Left cardiac atrium (tissue), 4 donors: ENCODE measurements at regions of chr1 and their contacts with region 1.

Region 1: GRCh38 chr1:205255941-205256780 is 28.4 kb downstream of the TMCC2 start:
- DNase-seq: peak; percentile 90
- ATAC-seq: peak; percentile 89 to 91

Region 2: DNA sequence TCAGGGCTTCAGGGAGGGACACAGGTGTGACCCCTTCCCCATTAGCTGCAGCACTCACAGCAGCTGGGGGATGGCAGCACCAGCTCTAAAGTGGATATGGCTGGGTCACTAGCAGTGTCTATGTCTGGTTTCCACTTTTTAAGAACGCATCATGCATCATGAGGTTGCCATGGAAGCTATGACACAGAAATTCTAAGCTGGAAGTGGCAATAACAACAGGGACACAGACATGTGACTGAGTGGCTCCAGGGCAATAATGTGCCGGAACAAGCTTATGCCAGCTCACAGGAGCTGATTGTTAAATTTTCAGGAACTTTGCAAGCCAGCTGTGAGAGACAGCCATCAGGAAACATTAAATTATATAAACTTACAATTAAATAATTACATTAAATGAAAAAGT is 436.7 kb before region 1 on chr1:
- intact Hi-C with region 1: loop called in 1 of 2 experiments (anchors 10 kb)
- DNase-seq: no peak
- ATAC-seq: no peak

Region 3: DNA sequence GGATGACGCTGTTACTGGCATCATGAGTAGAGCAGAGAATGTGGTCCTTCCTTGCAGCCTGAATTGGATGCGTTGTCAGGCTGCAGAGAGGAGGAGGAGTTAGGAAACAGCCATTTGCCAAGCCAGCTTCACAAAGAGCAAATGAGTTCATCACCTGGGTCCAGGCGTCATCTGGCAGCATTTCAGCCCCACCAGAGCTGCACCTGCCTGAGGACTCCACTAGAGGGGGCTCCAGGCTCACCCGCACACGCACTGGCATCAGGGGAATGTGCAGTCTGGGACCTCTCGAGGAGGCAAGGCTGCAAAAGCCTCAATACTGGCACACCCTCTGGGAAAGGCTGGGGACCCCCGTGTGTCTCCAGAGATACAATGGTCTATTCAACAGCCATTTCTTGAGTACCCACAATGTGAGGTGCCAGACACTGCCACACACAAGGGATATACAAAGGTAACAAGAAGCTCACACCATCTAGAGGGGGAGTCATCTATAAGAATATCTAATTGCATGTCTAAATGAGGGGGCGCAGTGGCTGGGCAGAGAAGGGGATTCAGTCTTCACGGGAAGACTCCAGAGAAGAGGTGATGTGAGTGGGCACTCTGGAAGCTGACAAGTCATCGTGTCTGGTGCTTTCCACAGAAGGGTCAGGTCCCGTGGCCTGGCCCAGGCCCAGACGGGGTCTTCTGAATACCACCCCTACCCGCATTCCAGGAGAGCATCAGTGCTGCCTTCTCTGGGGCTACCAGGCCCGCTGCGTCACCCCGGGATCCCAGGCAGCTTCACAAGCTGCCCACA is 266.7 kb before region 1 on chr1:
- intact Hi-C with region 1: loop called (anchors 5 to 10 kb)
- DNase-seq: peak; percentile 66
- ATAC-seq: peak; percentile 81 to 85

Region 4: GRCh38 chr1:205121660-205122488 is 134.3 kb before region 1 on chr1 and contains the start of gene RBBP5:
- intact Hi-C with region 1: loop called in 1 of 2 experiments (anchors 5 kb)
- DNase-seq: peak; percentile 93
- ATAC-seq: peak; percentile 99
- total RNA-seq, gene RBBP5: 10.0 to 11.0 TPM

Region 5: GRCh38 chr1:205229399-205229871 is 26.7 kb before region 1 on chr1:
- intact Hi-C with region 1: loop called in 1 of 2 experiments (anchors 1 kb)
- DNase-seq: peak; percentile 50
- ATAC-seq: peak; percentile 67 to 73

Region 6: DNA sequence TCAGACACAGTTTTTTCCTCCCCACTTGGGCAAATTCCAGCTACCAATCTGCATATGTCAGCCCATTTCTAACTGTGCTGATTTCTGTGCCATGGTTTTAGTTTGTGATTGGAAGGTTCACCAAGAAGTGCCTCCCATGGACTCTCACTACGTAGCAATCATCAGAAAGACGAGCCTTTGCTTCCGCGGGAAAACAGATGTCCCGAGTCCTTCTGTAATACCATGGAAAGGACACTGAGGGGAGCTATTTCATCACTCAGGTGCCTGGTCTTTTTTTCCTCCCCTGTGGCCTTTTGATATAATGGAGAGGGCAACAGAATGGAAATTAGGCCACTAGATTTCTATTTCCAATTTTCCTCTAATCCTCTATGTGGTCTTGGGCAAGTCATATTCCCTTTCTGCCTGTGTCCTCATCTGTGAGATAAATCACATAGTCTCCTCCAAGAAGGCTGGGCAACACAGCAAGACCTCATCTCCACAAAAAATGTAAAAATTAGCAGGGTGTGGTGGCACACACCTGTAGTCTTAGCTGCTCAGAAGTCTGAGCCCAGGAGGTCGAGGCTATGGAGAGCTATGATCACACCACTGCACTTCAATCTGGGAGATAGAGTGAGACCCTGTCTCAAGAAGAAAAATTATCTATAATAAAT is 140.9 kb after region 1 on chr1:
- intact Hi-C with region 1: no loop called
- DNase-seq: no peak
- ATAC-seq: peak; percentile 57 to 61

Region 7: DNA sequence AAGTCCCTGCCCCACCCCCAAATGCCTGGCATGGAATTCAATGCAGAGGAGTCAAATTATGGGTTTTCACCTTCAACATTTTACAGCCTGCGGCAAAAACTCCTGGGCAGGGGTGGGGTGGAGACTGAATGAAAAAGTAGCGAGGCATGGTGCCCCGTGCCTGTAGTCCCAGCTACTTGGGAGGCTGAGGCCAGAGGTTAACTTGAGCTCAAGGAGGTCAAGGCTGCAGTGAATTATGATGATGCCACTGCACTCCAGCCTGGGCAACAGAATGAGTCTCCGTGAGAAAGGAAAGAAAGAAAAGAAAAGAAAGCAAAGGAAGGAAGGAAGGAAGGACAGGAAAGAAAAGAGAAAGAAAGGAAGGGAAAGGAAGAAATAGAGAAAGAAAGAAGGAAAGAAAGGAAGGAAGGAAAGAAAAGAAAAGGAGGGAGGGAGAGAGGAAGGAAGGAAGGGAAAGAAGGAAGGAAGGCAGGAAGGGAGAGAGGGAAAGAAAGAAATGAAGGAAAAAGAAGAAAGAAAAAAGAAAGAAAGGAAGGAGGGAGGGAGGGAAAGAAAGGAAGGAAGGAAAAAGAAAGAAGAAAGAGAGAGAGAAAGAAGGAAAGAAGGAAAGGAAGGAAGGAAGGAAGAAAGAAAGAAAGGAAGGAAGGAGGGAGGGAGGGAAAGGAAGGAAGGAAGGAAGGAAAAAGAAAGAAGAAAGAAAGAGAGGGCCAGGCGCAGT is 154.6 kb after region 1 on chr1:
- intact Hi-C with region 1: no loop called
- DNase-seq: no peak
- ATAC-seq: no peak